ENCODE measurements at regions of chr10 and their contacts with region 1.

Region 1: GRCh38 chr10:20110125-20111100 is 294.2 kb downstream of the PLXDC2 start:
- DNase-seq: no peak
- ATAC-seq: no peak
- H3K4me3 ChIP-seq: no peak overlapping the region
- H3K27ac ChIP-seq: no peak overlapping the region
- H3K4me1 ChIP-seq: no peaks in the 10 kb centered on the region
- H3K27me3 ChIP-seq: no peaks in the 10 kb centered on the region
- CTCF ChIP-seq: no peak
- POLR2A ChIP-seq: no peak
- RAD21 ChIP-seq: no peak

Region 2: DNA sequence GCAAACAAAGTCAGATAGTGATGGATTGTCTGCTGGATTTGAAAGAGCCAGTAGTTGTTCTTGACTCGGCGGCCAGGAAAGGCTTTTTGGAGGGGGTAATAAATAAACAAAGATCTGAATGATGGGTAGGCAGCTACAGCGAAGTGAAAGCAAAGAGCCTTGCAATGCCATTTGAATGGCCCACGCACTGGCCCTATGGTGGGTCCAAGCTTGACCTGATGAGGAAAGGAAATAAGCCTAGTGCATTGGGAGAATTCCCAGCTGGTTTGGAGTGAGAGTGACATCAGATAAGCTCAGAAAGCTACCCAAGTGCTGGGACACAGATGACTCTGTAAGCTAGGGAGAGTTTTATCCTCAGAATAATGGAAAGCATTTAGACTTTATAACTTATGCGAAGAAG is 71.0 kb after region 1 on chr10:
- CTCF ChIA-PET with region 1: no interaction called
- POLR2A ChIA-PET with region 1: no interaction called
- RAD21 ChIA-PET with region 1: no interaction called
- intact Hi-C with region 1: loop called (anchors 2 kb)
- DNase-seq: no peak
- ATAC-seq: no peak
- H3K4me3 ChIP-seq: no peak overlapping the region
- H3K27ac ChIP-seq: no peak overlapping the region
- H3K4me1 ChIP-seq: no peaks in the 10 kb centered on the region
- H3K27me3 ChIP-seq: no peaks in the 10 kb centered on the region
- CTCF ChIP-seq: no peak
- POLR2A ChIP-seq: no peak
- RAD21 ChIP-seq: no peak

Measured in HCT116 (cell line).